ENCODE measurements at regions of chr4 and their contacts with region 1.

Region 1: DNA sequence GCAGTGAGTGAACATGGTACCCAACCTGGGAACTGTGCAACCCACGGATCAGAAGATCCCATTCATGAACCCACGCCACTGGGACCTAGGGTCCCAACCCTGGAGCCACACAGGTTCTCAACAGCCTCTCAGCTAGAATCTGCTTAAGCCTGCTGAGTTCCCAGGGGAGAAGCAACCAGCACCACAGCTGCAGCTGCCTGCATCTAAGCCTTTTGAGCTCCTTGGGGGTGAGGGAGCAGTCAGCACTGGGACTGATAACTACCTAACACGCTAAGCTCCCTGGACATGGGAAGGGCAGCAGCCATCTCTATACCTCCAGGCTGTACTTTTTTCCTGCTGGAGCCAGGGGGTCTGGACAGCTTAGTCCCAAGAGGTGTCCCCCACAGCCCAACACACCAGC is 179.3 kb downstream of the IL15 start:
- DNase-seq: no peak

Region 2: GRCh38 chr4:141802333-141802732 is 13.3 kb before region 1 on chr4:
- intact Hi-C with region 1: loop called in 1 of 2 experiments (anchors 1 kb)
- DNase-seq: no peak